ENCODE measurements at regions of chr1 and their contacts with region 1.

Region 1: GRCh38 chr1:209565759-209566678 is 17.5 kb upstream of the CAMK1G start:
- DNase-seq: peak; percentile 92
- H3K4me3 ChIP-seq: no peak overlapping the region
- H3K27ac ChIP-seq: no peak overlapping the region
- H3K4me1 ChIP-seq: peaks cover 33% of the 10 kb centered on the region
- H3K27me3 ChIP-seq: no peaks in the 10 kb centered on the region
- CTCF ChIP-seq: peak; percentile 93

Region 2: DNA sequence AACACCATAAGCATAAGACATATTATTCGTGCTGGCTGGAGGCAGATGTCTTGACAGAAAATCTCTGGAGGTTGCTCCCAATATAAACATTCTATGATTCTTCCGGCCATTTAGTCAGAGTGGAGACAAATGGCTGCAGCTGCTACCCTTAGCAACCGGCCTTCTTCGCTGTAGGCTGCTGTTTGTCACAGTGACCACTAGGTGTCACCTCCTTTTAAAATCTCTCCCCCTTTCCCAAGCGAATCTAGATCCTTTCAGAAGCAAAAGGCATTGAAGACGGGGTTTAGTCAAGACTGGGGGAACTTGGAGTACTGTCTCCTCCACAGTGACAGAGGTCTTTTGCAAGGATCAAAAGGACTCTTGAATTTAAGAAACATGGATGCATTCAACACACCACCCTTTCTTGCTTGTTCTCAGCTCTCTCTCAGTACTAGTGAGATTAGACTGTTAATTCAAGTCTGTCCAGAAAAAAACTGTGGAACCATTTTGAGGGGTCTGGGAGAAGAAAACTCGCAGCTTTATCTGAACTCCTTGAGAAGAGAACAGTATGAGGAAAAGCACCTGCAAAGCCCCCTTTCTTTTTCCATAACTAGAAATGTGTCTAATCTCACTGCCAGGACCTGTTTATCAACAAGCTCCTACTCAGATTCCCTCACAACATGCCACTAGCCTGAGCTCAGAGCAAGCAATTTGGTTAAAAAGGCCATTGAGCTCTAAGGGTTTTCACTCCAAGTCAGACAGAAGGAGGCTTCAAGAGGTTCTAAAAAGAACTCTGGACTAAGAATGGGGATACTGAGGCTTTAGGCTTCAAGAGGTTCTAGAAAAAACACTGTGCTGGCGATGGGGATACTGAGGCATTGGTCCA is 913.5 kb before region 1 on chr1:
- CTCF ChIA-PET with region 1: interaction called, 3 read pairs
- POLR2A ChIA-PET with region 1: no interaction called
- intact Hi-C with region 1: loop called (anchors 2 kb)
- DNase-seq: peak; percentile 74
- H3K4me3 ChIP-seq: no peak overlapping the region
- H3K27ac ChIP-seq: no peak overlapping the region
- H3K4me1 ChIP-seq: no peaks in the 10 kb centered on the region
- H3K27me3 ChIP-seq: peaks cover 4% of the 10 kb centered on the region
- CTCF ChIP-seq: peak; percentile 84

Region 3: DNA sequence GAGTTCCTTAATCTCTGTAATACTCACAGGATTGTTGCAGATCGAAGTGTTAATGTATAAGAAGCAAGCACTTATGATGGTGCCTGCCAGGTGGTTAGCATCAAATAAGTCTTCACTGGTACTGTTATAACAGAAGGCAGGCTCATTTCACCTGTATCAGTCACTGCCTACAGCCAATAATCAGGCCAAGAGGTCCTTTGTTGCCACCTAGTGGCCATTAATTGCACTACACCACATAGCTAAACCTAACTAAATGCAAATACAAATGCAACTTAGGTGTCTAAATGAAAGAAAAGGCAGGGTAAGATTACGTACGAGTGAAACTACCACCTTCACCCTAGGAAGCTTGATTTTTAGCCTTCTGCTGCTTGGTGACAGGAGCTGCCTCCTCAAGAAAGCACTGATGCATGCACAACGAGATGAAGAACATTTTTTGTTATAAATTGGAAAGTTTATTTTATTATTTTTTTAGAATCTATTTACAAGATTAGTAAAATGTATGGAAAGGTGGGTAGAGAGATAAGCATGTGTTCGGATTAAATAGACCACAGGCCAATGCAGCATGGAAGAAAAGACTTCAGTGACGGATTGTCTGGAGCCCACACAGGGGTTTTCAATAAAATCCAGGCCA is 317.3 kb before region 1 on chr1:
- CTCF ChIA-PET with region 1: no interaction called
- POLR2A ChIA-PET with region 1: no interaction called
- intact Hi-C with region 1: loop called (anchors 10 kb)
- DNase-seq: peak; percentile 63
- H3K4me3 ChIP-seq: no peak overlapping the region
- H3K27ac ChIP-seq: no peak overlapping the region
- H3K4me1 ChIP-seq: no peaks in the 10 kb centered on the region
- H3K27me3 ChIP-seq: peaks cover 18% of the 10 kb centered on the region
- CTCF ChIP-seq: peak; percentile 88

Region 4: GRCh38 chr1:209692745-209693504 is 126.9 kb after region 1 on chr1:
- CTCF ChIA-PET with region 1: interaction called, 4 read pairs
- POLR2A ChIA-PET with region 1: no interaction called
- intact Hi-C with region 1: loop called (anchors 1 kb)
- DNase-seq: peak; percentile 95
- H3K4me3 ChIP-seq: no peak overlapping the region
- H3K27ac ChIP-seq: peak overlapping the region; percentile 50
- H3K4me1 ChIP-seq: peaks cover 46% of the 10 kb centered on the region
- H3K27me3 ChIP-seq: no peaks in the 10 kb centered on the region
- CTCF ChIP-seq: peak; percentile 95

Region 5: DNA sequence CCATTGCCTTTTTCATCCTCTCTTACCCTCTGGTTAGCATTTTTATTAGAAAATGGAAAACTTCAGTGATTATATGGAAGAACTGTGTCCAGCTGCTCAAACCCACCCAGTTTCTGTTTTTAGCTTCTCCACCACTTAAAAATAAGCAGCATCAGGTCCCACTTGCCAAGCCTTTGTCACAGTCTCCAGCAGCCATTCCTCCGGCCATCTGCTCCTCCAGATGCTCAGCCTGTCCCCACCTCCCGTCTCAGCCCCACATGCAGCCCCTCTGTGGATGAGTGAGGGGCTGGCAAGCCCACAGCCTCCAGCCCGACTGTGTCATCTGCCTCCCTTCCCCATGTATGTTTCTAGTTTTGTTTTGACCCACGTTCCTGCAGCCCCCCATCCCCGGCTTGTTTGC is 1052.3 kb after region 1 on chr1:
- CTCF ChIA-PET with region 1: no interaction called
- POLR2A ChIA-PET with region 1: no interaction called
- intact Hi-C with region 1: no loop called
- DNase-seq: no peak
- H3K4me3 ChIP-seq: no peak overlapping the region
- H3K27ac ChIP-seq: no peak overlapping the region
- H3K4me1 ChIP-seq: peaks cover 7% of the 10 kb centered on the region
- H3K27me3 ChIP-seq: peaks cover 28% of the 10 kb centered on the region
- CTCF ChIP-seq: no peak